Activated naive CD4-positive, alpha-beta T cell treated with anti-CD3 and anti-CD28 coated beads, Interleukin-2, amount 10 ng/mL, durations not matched to agents 7 days and 5 days (primary cell): ENCODE measurements at regions of chr4 and their contacts with region 1.

Region 1: GRCh38 chr4:42568610-42569207 is 88.2 kb downstream of the ATP8A1 start:
- DNase-seq: peak; percentile 77
- H3K4me3 Mint-ChIP-seq: no peak overlapping the region
- H3K27ac Mint-ChIP-seq: no peak overlapping the region
- H3K4me1 Mint-ChIP-seq: no peaks in the 10 kb centered on the region
- H3K27me3 Mint-ChIP-seq: no peaks in the 10 kb centered on the region

Region 2: DNA sequence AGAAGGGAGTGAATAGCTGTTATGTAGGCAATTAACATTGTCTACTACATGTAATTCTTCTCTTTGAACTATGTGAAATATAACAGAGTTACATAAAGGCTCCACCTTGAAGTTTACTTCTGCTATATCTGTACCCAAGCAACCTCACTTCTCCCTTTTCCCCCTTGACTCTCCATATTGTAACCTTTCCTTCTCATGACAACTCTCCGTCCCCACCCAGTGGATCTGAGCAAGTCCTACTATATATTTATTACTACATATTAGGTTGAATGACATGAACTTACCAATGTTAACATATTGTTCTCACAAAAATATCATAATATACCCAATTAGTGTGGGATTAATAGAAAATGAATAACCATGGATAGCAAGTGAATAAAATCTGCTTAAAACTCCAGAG is 181.4 kb after region 1 on chr4:
- CTCF ChIA-PET with region 1: interaction called, 19 read pairs
- DNase-seq: peak; percentile 34
- H3K4me3 Mint-ChIP-seq: no peak overlapping the region
- H3K27ac Mint-ChIP-seq: no peak overlapping the region
- H3K4me1 Mint-ChIP-seq: no peaks in the 10 kb centered on the region
- H3K27me3 Mint-ChIP-seq: no peaks in the 10 kb centered on the region

Region 3: DNA sequence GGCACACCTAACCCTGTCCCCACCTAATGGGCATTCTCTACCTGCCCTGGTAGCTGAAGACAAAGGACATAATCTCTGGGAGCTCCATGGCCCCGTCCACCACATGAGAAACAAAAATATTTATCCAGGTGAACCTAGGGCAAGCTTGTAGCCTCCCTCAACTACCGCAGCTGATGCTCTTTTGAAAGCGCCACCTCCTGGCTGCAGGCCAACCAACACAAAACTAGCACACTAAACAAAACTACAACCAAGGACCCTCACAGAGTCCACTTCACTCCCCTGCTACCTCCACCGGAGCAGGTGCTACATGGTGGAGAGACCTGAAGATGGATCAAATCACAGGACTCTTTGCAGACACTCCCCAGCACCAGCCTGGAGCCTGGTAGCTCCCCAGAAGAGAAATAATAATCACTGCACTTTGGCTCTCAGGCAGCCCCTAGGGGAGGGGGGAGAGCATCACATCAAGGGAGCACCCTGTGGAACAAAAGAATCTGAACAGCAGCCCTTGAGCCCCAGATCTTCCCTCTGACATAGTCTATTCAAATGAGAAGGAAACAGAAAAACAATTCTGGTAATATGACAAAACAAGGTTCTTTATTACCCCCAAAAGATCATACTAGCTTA is 199.5 kb after region 1 on chr4:
- CTCF ChIA-PET with region 1: interaction called, 30 read pairs
- DNase-seq: no peak
- H3K4me3 Mint-ChIP-seq: no peak overlapping the region
- H3K27ac Mint-ChIP-seq: no peak overlapping the region
- H3K4me1 Mint-ChIP-seq: no peaks in the 10 kb centered on the region
- H3K27me3 Mint-ChIP-seq: no peaks in the 10 kb centered on the region

Region 4: GRCh38 chr4:42865572-42866189 is 297.0 kb after region 1 on chr4:
- CTCF ChIA-PET with region 1: interaction called, 12 read pairs
- DNase-seq: peak; percentile 58
- H3K4me3 Mint-ChIP-seq: no peak overlapping the region
- H3K27ac Mint-ChIP-seq: no peak overlapping the region
- H3K4me1 Mint-ChIP-seq: no peaks in the 10 kb centered on the region
- H3K27me3 Mint-ChIP-seq: no peaks in the 10 kb centered on the region